Head of caudate nucleus (tissue), 42 donors: ENCODE measurements at regions of chr16 and their contacts with region 1.

Region 1: DNA sequence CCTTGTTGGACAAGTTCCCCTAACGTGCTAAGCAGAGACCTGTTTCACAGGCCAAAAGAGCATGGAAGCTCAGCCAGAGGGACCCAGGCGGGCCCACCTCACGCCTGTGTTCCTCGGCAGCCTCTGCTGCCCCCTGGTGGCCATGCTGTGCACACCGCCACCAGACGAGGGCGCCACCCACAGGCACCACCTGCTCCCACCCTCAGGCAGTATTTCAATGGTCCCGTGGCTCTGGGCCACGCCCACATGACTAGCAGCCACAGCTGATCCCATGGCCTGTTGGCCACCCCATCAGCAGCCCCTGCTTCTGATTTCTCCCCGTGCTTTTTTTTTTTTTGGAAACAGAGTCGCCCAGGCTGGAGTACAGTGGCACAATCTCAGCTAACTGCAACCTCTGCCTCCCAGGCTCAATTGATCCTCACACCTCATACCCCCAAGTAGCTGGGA is 18.9 kb downstream of the MPG start:
- DNase-seq: peak; percentile 71 to 95 (median 90)

Region 2: GRCh38 chr16:65671-66137 is 31.3 kb before region 1 on chr16:
- intact Hi-C with region 1: loop called (anchors 2 kb)
- DNase-seq: peak; percentile 79 to 96 (median 89)